Activated naive CD4-positive, alpha-beta T cell treated with anti-CD3 and anti-CD28 coated beads for 36 hours (primary cell): ENCODE measurements at regions of chr20 and their contacts with region 1.

Region 1: GRCh38 chr20:59933849-59934596 is 586 bp upstream of the SYCP2 start:
- DNase-seq: peak; percentile 77
- H3K4me3 Mint-ChIP-seq: peak overlapping the region; percentile 68
- H3K27ac Mint-ChIP-seq: no peak overlapping the region
- H3K4me1 Mint-ChIP-seq: peaks cover 29% of the 10 kb centered on the region
- H3K27me3 Mint-ChIP-seq: peaks cover 2% of the 10 kb centered on the region

Region 2: DNA sequence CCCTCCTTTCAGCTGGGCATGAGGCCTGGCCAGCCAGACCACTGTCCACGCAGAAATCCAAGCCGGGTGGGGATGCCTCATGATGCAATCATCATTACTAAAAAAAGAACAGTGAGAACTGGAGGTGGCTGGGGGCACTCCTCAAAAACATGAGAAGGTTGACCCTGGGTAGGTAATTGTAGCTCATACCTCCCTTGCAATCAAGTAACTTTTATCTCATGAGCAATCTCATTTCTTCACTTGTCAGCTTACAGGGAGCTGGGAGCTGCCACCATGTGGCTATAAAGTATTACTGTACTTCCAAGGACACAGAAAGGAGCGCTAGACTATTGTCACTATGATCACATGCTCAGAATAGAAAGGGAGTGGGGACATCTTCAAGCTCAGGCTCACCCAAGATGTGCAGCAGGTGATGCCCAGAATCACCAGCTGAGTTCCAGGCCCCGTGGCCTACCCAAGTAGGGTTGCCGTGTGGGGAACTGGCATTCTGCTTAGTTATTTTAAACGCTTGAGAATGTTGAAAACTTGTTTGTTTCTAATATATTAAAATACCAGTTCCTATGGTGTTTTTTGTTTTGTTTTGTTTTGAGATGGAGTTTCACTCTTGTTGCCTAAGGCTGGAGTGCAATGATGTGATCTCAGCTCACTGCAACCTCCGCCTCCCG is 21.2 kb after region 1 on chr20:
- CTCF ChIA-PET with region 1: interaction called, 6 read pairs
- intact Hi-C with region 1: loop called (anchors 1 kb)
- DNase-seq: no peak
- H3K4me3 Mint-ChIP-seq: no peak overlapping the region
- H3K27ac Mint-ChIP-seq: no peak overlapping the region
- H3K4me1 Mint-ChIP-seq: no peaks in the 10 kb centered on the region
- H3K27me3 Mint-ChIP-seq: no peaks in the 10 kb centered on the region